MCF 10A (cell line): ENCODE measurements at regions of chr6 and their contacts with region 1.

Region 1: GRCh38 chr6:27091661-27092646 is 155.5 kb upstream of the PRSS16 start:
- DNase-seq: peak; percentile 72
- H3K4me3 Mint-ChIP-seq: peak overlapping the region; percentile 71
- H3K27ac Mint-ChIP-seq: peak overlapping the region; percentile 17
- H3K4me1 Mint-ChIP-seq: peaks cover 7% of the 10 kb centered on the region
- H3K27me3 Mint-ChIP-seq: no peaks in the 10 kb centered on the region
- CTCF ChIP-seq: no peak

Region 2: DNA sequence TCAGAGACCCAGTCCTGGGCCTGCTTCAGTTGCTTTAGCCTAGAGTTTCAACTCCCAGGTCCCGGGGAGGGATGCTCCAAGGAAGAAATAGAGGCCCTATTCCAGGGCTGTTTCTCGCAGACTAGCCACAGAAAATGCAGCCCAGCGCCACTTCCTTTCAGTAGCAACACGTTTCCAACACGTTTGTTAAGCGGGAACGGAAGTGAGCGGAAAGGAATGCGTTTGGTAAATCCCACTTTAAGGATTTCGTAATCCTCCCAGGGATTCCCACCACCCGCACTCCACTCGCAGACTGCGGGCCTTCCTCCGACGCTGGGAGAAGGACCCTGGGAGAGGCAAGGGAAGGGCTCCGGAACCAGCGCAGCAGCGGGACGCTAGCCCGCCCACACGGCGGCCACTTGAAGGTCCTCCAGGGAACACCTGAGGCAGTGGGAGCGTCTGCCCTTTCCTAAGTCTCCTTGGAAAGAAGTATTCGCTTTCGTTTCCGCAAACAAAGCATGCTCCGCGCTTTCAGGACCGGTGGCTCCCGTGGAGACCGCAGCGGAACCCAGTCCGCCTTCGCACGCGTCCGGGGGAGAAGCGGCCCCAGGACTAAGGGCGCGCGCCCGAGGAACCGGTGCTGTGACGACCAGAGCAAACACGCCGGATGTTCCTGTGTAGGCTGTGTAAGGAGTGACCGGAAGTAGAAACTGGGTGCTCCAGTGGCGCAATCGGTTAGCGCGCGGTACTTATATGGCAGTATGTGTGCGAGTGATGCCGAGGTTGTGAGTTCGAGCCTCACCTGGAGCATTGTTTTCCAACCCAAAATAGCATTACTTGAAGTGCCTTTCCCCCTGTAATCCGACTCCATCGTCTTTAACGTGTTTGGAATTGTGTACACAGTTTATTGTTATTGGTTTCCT is 72.1 kb before region 1 on chr6:
- CTCF ChIA-PET with region 1: no interaction called
- POLR2A ChIA-PET with region 1: interaction called, 4 read pairs
- intact Hi-C with region 1: loop called (anchors 2 kb)
- DNase-seq: peak; percentile 93
- H3K4me3 Mint-ChIP-seq: peak overlapping the region; percentile 91
- H3K27ac Mint-ChIP-seq: peak overlapping the region; percentile 94
- H3K4me1 Mint-ChIP-seq: peaks cover 27% of the 10 kb centered on the region
- H3K27me3 Mint-ChIP-seq: no peaks in the 10 kb centered on the region
- CTCF ChIP-seq: no peak